Calu3 (cell line): ENCODE measurements at regions of chr3 and their contacts with region 1.

Region 1: DNA sequence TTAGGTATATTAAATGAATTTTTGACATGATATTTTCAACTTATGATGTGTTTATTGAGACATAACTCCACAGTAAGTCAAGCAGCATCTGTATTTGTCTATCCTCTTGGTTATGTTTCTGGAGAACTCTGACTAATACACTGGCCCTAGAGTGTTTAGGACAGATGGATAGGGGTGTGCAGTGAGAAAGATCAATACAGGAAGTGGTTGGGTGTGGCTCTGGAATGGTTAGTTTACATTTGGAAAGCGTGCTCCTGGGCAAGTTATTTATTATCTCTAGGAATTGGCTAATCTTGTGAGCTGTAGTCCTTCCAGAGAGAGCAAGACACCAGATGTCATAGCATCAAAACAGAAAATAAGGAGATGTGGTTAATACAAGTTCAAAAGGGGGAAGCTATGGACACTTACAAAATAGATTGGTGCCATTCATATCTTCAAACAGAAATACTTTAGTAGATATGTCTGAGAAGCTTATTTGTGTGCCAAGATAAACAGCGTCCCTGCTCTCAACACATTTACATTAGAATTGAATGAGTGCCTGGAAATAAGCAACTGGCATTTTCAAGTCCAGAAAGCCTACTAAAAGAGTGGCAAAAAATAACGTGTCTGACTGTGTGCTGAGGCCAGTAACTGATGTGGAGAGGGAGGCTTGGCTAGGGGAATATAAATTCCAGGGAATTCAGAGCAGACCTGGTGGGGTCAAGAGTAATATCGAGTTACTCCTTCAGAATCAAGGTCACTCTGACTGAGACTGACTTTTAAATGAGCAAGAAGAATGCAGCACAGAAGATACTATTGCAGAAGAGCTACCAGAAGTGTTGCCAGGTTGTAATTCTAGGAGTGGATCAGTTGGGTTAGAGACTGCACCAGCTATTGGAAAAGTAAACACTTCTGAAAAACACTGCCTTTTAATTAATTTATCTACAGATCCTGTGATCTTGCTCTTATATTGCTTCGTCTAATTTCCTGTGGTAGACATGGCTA is 33.4 kb upstream of the PLAAT1 start:
- DNase-seq: peak; percentile 72
- H3K4me3 Mint-ChIP-seq: peak overlapping the region; percentile 40
- H3K27ac Mint-ChIP-seq: peak overlapping the region; percentile 76
- H3K4me1 Mint-ChIP-seq: peaks cover 17% of the 10 kb centered on the region
- H3K27me3 Mint-ChIP-seq: no peaks in the 10 kb centered on the region
- CTCF ChIP-seq: no peak

Region 2: GRCh38 chr3:193240850-193241706 is 33.5 kb after region 1 on chr3 and contains the start of gene PLAAT1:
- CTCF ChIA-PET with region 1: interaction called, 3 read pairs
- intact Hi-C with region 1: loop called (anchors 2 kb)
- DNase-seq: peak; percentile 90
- H3K4me3 Mint-ChIP-seq: peak within 1 kb of the TSS; percentile 81
- H3K27ac Mint-ChIP-seq: peak within 1 kb of the TSS; percentile 13
- H3K4me1 Mint-ChIP-seq: peaks cover 13% of the 10 kb centered on the region
- H3K27me3 Mint-ChIP-seq: no peaks in the 10 kb centered on the region
- CTCF ChIP-seq: no peak
- total RNA-seq, gene PLAAT1: 6.2 and 7.3 TPM in 2 replicates